SK-N-SH (cell line): ENCODE measurements at regions of chr4 and their contacts with region 1.

Region 1: DNA sequence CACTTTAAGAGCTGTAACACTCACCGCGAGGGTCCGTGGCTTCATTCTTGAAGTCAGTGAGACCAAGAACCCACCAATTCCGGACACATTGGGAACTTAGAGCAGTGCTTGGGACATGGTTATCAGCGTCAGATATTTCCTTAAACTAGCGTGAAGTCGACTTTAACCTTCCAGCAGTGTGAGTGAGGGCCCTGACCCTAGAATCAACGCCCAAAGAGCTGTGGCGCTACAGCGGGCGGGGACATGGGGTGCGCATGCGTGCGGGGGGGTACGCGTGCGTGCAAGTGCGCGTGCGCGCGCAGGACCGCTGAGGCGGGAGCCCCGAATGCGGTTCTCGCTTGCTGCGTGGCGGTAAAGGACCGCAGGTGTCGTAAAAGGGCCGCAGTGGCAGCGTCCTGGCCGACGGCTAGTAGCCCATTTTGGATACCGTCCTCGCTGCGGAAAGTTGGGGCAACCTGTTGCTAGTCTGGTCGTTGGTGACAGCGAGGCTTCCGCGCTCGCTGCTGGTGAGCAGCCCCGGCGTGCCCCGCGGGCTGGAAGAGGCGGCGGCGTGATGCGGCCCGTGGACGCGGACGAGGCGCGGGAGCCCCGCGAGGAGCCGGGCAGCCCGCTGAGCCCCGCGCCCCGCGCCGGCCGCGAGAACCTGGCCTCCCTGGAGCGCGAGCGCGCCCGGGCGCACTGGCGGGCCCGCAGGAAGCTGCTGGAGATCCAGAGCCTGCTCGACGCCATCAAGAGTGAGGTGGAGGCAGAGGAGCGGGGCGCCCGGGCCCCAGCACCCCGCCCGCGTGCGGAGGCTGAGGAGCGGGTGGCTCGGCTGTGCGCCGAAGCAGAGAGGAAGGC is 19.8 kb upstream of the S100P start:
- DNase-seq: peak; percentile 100
- H3K4me3 ChIP-seq: peak overlapping the region; percentile 73 to 87
- H3K27ac ChIP-seq: peak overlapping the region; percentile 89 to 91
- H3K4me1 ChIP-seq: peaks cover 16 to 20% of the 10 kb centered on the region in 2 experiments; a peak in 2 of 4 replicates
- H3K27me3 ChIP-seq: no peaks in the 10 kb centered on the region
- CTCF ChIP-seq: no peak
- EP300 ChIP-seq: no peak
- RAD21 ChIP-seq: no peak

Region 2: DNA sequence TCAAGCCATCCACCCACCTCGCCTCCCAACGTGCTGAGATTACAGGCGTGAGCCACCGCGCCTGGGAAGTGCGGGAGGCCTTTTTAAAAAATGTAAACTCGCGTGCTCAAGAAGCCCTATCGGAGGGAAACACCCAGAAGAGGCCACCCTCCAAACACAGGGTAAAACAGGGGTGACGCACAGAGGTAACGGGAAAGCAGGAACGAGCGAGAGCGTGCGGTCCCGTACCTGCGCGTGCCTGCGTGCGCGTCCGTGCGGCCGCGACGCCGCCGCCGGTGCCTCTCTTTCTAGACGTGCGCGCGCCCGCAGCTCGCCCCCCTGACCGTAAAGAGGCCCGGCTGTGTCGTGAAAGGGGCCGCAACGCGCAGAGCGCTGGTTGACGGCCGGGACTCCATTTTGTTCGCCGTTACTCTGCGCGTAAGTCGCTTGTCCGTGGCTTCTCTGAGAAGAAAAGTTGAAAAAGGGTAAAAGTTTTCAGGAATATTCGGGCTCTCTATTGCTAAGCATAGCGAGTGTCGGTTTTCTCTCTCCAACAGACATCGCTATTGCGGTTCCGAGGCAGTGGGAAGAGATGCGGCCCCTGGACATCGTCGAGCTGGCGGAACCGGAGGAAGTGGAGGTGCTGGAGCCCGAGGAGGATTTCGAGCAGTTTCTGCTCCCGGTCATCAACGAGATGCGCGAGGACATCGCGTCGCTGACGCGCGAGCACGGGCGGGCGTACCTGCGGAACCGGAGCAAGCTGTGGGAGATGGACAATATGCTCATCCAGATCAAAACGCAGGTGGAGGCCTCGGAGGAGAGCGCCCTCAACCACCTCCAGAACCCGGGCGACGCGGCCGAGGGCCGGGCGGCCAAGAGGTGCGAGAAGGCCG is 33.4 kb before region 1 on chr4 and contains the start of gene MRFAP1:
- CTCF ChIA-PET with region 1: interaction called, 4 read pairs
- POLR2A ChIA-PET with region 1: interaction called, 11 read pairs
- DNase-seq: peak; percentile 98
- H3K4me3 ChIP-seq: peak within 1 kb of the TSS; percentile 98 to 99
- H3K27ac ChIP-seq: peak within 1 kb of the TSS; percentile 95 to 96
- H3K4me1 ChIP-seq: peaks cover 0 to 14% of the 10 kb centered on the region in 2 experiments; a peak in 3 of 4 replicates
- H3K27me3 ChIP-seq: no peaks in the 10 kb centered on the region
- CTCF ChIP-seq: no peak
- EP300 ChIP-seq: no peak; a peak in 1 of 4 replicates
- RAD21 ChIP-seq: no peak
- polyA plus RNA-seq, gene MRFAP1: 247 and 416 TPM in 2 replicates

Region 3: GRCh38 chr4:6663596-6664393 is 10.1 kb before region 1 on chr4:
- CTCF ChIA-PET with region 1: interaction called, 25 read pairs
- POLR2A ChIA-PET with region 1: interaction called, 7 read pairs
- DNase-seq: peak; percentile 49
- H3K4me3 ChIP-seq: no peak overlapping the region
- H3K27ac ChIP-seq: no peak overlapping the region
- H3K4me1 ChIP-seq: peaks cover 0 to 3% of the 10 kb centered on the region in 2 experiments; a peak in 1 of 4 replicates
- H3K27me3 ChIP-seq: no peaks in the 10 kb centered on the region
- CTCF ChIP-seq: no peak
- EP300 ChIP-seq: no peak
- RAD21 ChIP-seq: no peak

Region 4: GRCh38 chr4:7017446-7018330 is 343.8 kb after region 1 on chr4:
- CTCF ChIA-PET with region 1: no interaction called
- POLR2A ChIA-PET with region 1: no interaction called
- DNase-seq: no peak
- H3K4me3 ChIP-seq: no peak overlapping the region
- H3K27ac ChIP-seq: no peak overlapping the region
- H3K4me1 ChIP-seq: peaks cover 5 to 6% of the 10 kb centered on the region in 2 experiments; a peak in 2 of 4 replicates
- H3K27me3 ChIP-seq: no peaks in the 10 kb centered on the region
- CTCF ChIP-seq: no peak
- EP300 ChIP-seq: no peak
- RAD21 ChIP-seq: no peak